Endothelial cell of umbilical vein (primary cell): ENCODE measurements at regions of chr7 and their contacts with region 1.

Region 1: DNA sequence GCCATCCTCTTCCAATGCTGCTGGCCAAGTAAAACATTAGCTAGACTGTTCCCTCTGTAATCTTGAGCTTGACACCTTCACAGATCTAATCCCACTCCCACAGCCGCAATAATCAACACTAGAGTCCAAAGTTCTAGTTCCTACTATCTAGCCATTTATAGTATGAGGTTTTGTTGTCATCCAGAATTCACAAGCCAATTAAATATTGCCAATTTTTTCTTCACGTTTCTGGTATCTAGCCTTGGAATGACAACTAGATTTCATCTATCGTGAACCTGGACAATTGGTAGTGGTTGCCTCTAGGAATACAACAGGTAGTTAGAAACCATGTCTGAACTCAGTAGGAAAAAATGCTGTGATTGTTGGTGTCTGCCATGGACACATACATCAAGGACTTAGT is 10.4 kb downstream of the WASL start:
- DNase-seq: no peak
- H3K4me3 ChIP-seq: no peak overlapping the region
- H3K27ac ChIP-seq: no peak overlapping the region
- H3K4me1 ChIP-seq: peaks cover 2% of the 10 kb centered on the region
- H3K27me3 ChIP-seq: no peaks in the 10 kb centered on the region
- CTCF ChIP-seq: no peak
- POLR2A ChIP-seq: no peak

Region 2: DNA sequence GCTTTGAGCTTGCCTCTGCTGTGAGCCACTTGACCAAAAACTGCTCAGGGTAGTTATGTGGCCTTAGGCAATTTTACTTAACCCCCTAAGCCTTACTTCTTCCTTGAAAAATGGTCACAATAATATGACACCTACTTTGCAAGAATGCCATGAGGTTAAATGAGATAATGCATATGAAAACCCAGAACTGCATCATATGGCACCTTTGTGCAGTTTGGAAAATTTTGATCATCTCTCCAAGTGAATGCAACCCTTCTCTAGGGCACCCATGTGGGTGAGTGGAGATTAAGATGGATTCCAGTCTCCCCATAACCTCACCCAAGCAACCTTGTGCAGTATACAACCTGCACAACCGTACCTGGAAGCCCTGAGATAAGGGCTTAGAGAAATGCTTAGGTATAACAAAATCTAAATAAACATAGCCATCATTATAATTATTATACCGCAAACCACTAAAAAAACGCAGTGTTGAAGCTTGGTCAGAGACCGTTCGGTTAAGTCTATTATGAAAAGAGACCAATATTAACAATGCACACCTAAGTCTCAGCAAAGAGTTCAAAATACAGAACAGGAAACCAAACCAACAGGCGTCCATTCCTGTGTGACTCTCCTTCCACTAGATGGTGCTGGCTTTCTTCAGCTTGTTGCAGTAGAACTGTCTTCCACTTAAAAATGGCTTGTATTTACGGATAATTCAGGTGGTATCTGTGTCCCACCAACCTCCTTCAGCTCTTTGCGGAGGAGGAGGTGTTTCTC is 157.8 kb before region 1 on chr7:
- CTCF ChIA-PET with region 1: no interaction called
- POLR2A ChIA-PET with region 1: no interaction called
- dilution Hi-C with region 1: no loop called
- intact Hi-C with region 1: no loop called
- DNase-seq: peak; percentile 61
- H3K4me3 ChIP-seq: no peak overlapping the region
- H3K27ac ChIP-seq: no peak overlapping the region
- H3K4me1 ChIP-seq: no peaks in the 10 kb centered on the region
- H3K27me3 ChIP-seq: no peaks in the 10 kb centered on the region
- CTCF ChIP-seq: peak; percentile 69 to 73
- POLR2A ChIP-seq: no peak

Region 3: DNA sequence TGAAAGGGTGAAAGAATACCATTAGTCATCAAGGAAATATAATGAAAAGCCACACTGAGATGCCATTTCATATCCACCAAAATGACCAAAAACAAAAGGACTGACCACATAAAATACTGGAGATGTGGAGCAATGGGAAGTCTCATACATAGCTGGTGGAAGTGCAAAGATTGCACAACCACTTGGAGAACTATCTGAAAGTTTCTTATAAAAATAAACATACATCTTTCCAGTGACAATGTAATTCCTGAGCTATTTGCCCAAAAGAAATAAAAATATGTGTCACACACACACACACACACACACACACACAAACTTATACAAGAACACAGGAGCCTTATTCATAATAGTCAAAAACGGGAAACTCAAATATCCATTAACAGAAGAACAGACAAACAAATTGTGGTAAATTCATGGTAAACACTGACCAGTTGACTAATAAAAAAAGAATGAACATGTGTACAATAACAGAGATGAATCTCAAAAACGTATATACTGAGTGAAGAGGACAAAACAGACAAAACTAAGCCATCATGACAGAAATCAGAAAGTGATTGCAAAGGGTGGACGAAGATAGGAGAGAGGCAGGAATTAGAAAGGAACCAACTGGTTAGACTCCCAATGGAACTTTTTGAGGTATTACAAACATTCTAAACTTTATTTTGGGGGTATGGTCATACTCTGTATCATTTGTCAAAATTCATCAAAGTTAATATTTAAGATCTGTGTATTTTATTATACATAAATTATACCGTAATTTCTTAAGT is 11.1 kb before region 1 on chr7:
- CTCF ChIA-PET with region 1: interaction called, 5 read pairs
- POLR2A ChIA-PET with region 1: no interaction called
- dilution Hi-C with region 1: no loop called
- intact Hi-C with region 1: loop called (anchors 1 kb)
- DNase-seq: peak; percentile 79
- H3K4me3 ChIP-seq: no peak overlapping the region
- H3K27ac ChIP-seq: peak overlapping the region; percentile 3
- H3K4me1 ChIP-seq: peaks cover 15% of the 10 kb centered on the region
- H3K27me3 ChIP-seq: no peaks in the 10 kb centered on the region
- CTCF ChIP-seq: no peak
- POLR2A ChIP-seq: no peak